ENCODE measurements at regions of chr22 and their contacts with region 1.

Region 1: GRCh38 chr22:38311323-38311620 is 6.0 kb downstream of the CSNK1E start:
- DNase-seq: no peak
- H3K4me3 ChIP-seq: no peak overlapping the region
- H3K27ac ChIP-seq: peak overlapping the region; percentile 97 to 99
- H3K4me1 ChIP-seq: peaks cover 32 to 57% of the 10 kb centered on the region in 2 donors
- H3K27me3 ChIP-seq: no peaks in the 10 kb centered on the region
- CTCF ChIP-seq: no peak

Region 2: DNA sequence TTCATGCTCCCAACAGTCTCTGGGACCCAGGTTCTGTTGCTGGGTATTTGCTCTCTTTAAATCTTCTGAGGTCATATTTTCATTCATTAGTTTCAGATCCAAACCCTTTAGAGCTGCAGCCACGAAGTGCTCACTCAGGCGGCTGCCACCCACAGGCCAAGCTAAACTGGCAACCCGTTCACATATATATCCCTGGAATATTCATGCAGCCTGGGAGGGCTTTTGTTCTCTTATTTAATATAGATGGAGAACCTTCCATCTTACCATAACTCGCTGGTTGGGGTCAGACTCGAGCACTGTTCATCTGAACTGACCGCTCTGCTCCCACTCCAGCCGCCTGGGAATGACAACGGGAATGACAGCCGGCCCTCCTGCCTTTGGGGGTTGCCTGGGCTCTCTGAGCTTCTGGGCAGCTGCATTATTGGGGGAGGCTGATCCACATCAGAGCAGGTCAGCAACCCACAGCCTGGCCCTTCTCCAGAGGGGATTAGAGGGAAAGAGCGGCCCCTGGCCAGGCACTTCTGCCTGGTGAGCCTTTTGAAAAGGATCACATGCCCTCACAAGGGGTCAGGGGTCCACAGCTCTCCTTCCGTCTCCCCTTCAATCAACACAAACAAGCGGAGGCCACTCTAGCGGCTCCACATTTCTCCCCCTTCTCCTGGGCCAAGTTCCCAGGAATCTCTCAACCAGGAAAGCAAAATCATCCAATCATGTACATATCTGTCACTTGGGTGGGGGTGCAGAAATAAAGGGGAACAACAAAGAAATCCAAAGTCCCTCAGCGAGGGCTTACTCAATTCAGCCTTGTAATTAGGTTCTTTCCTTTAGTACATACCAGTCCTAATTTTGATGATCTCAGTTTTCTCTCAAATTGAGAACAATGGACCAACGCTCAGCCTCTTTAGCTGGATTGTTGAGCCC is 50.3 kb before region 1 on chr22:
- intact Hi-C with region 1: loop called (anchors 2 kb)
- DNase-seq: no peak
- H3K4me3 ChIP-seq: peak overlapping the region in 1 of 2 donors; percentile 16
- H3K27ac ChIP-seq: peak overlapping the region; percentile 83 to 88
- H3K4me1 ChIP-seq: peaks cover 12 to 50% of the 10 kb centered on the region in 2 donors
- H3K27me3 ChIP-seq: no peaks in the 10 kb centered on the region
- CTCF ChIP-seq: peak in 2 of 3 experiments; percentile 14 to 37

Measured in ascending aorta (tissue), 2 donors.